ENCODE measurements at regions of chr11 and their contacts with region 1.

Region 1: GRCh38 chr11:86193297-86194095 is 51.1 kb upstream of the EED start:
- DNase-seq: peak; percentile 72
- H3K4me3 ChIP-seq: no peak overlapping the region
- H3K27ac ChIP-seq: no peak overlapping the region
- H3K4me1 ChIP-seq: no peaks in the 10 kb centered on the region; a peak in 3 of 4 replicates
- H3K27me3 ChIP-seq: no peaks in the 10 kb centered on the region
- CTCF ChIP-seq: peak; percentile 71
- EP300 ChIP-seq: peak in 1 of 2 experiments; percentile 28; a peak in 1 of 4 replicates
- RAD21 ChIP-seq: peak; percentile 68

Region 2: GRCh38 chr11:86157797-86158373 is 35.6 kb before region 1 on chr11:
- CTCF ChIA-PET with region 1: no interaction called
- POLR2A ChIA-PET with region 1: no interaction called
- DNase-seq: no peak
- H3K4me3 ChIP-seq: no peak overlapping the region
- H3K27ac ChIP-seq: no peak overlapping the region
- H3K4me1 ChIP-seq: peaks cover 13 to 14% of the 10 kb centered on the region in 2 experiments
- H3K27me3 ChIP-seq: no peaks in the 10 kb centered on the region
- CTCF ChIP-seq: no peak
- EP300 ChIP-seq: no peak
- RAD21 ChIP-seq: no peak

Region 3: GRCh38 chr11:86205421-86206336 is 12.2 kb after region 1 on chr11:
- CTCF ChIA-PET with region 1: interaction called, 14 read pairs
- POLR2A ChIA-PET with region 1: no interaction called
- DNase-seq: no peak
- H3K4me3 ChIP-seq: no peak overlapping the region
- H3K27ac ChIP-seq: no peak overlapping the region
- H3K4me1 ChIP-seq: no peaks in the 10 kb centered on the region
- H3K27me3 ChIP-seq: no peaks in the 10 kb centered on the region
- CTCF ChIP-seq: 0 out of 2 replicates have a peak, but pooled peaks have one; percentile 7
- EP300 ChIP-seq: no peak
- RAD21 ChIP-seq: peak; percentile 45

Region 4: GRCh38 chr11:86218125-86219084 is 24.9 kb after region 1 on chr11:
- CTCF ChIA-PET with region 1: interaction called, 11 read pairs
- POLR2A ChIA-PET with region 1: no interaction called
- DNase-seq: peak; percentile 70
- H3K4me3 ChIP-seq: peak overlapping the region in 1 of 2 experiments; percentile 28; a peak in 3 of 4 replicates
- H3K27ac ChIP-seq: no peak overlapping the region
- H3K4me1 ChIP-seq: peaks cover 0 to 5% of the 10 kb centered on the region in 2 experiments; a peak in 2 of 4 replicates
- H3K27me3 ChIP-seq: no peaks in the 10 kb centered on the region
- CTCF ChIP-seq: peak; percentile 92
- EP300 ChIP-seq: no peak
- RAD21 ChIP-seq: peak; percentile 89

Region 5: DNA sequence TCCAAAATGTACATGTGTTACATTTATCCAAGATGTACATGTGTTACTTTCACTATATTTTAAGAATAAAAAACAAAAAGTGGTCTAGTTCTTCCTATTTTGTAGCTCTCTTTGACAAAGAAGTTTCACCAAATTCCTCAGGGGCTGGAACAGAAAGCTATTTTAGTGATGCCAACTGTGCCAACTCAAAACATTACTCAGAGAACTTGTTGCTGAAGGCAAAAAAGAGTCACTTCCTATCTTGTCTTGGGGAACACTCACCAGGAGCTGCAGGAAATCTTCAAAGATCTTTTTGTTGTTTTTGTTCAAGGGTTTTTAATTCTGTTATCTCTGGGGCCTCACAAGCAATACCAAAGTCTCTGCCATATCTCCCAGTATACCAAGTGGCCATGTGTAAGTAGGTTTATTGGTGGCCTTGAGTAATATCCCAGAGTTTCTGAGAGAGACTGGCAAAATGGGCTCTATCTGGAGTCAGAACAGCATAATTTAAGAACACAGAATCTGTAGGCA is 37.5 kb after region 1 on chr11:
- CTCF ChIA-PET with region 1: no interaction called
- POLR2A ChIA-PET with region 1: no interaction called
- DNase-seq: no peak
- H3K4me3 ChIP-seq: no peak overlapping the region
- H3K27ac ChIP-seq: peak overlapping the region in 1 of 2 experiments; percentile 63; a peak in 2 of 4 replicates
- H3K4me1 ChIP-seq: peaks cover 0 to 9% of the 10 kb centered on the region in 2 experiments; a peak in 2 of 4 replicates
- H3K27me3 ChIP-seq: no peaks in the 10 kb centered on the region
- CTCF ChIP-seq: no peak
- EP300 ChIP-seq: no peak
- RAD21 ChIP-seq: no peak

Region 6: DNA sequence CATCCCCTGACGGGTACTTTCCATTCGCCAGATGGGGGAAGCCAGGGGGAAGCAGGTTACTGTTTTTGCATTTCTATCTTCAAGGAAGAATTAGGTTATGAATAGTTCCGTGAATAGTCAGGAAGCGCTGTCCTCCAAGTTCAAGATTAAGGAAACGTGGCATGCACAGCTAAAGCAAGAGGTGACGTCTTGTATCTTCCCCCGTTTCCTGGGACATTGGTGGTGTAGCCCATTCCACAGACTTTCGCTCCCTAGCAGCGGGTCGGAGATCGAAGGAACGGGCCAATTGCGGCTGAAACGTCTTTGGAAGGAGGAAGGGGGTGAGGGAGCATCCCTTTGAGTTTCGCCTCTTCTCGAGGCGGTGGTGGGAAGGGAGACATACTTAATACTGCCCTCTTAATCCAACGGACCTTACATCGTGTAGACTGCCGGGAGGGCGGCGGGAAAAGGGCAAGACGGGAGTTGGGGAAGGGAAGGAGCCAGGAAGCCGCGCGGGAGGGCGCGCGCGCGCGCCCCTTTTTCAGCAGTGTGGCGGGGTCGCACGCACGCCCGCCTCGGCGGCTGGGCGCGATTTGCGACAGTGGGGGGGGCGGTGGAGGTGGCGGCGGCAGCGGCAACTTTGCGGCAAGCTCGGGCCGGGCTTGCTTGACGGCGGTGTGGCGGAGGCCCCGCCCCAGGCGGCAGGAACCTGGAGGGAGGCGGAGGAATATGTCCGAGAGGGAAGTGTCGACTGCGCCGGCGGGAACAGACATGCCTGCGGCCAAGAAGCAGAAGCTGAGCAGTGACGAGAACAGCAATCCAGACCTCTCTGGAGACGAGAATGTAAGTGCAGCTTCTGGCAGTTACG is 51.2 kb after region 1 on chr11 and contains the start of gene EED:
- CTCF ChIA-PET with region 1: no interaction called
- POLR2A ChIA-PET with region 1: no interaction called
- DNase-seq: peak; percentile 91
- H3K4me3 ChIP-seq: peak within 1 kb of the TSS; percentile 81 to 94
- H3K27ac ChIP-seq: peak within 1 kb of the TSS; percentile 98 to 100
- H3K4me1 ChIP-seq: peaks cover 8 to 9% of the 10 kb centered on the region in 2 experiments
- H3K27me3 ChIP-seq: no peaks in the 10 kb centered on the region
- CTCF ChIP-seq: no peak
- EP300 ChIP-seq: peak in 1 of 2 experiments; percentile 69; a peak in 2 of 4 replicates
- RAD21 ChIP-seq: no peak
- polyA plus RNA-seq, gene EED: 12.8 and 14.2 TPM in 2 replicates

Region 7: GRCh38 chr11:86335122-86335767 is 141.7 kb after region 1 on chr11:
- CTCF ChIA-PET with region 1: no interaction called
- POLR2A ChIA-PET with region 1: no interaction called
- DNase-seq: no peak
- H3K4me3 ChIP-seq: no peak overlapping the region
- H3K27ac ChIP-seq: no peak overlapping the region
- H3K4me1 ChIP-seq: peaks cover 0 to 1% of the 10 kb centered on the region in 2 experiments; a peak in 1 of 4 replicates
- H3K27me3 ChIP-seq: no peaks in the 10 kb centered on the region
- CTCF ChIP-seq: no peak
- EP300 ChIP-seq: no peak
- RAD21 ChIP-seq: no peak